PC-9 (cell line): ENCODE measurements at regions of chr6 and their contacts with region 1.

Region 1: GRCh38 chr6:41494212-41495110 is 51.7 kb upstream of the FOXP4 start:
- DNase-seq: no peak
- H3K4me3 ChIP-seq: no peak overlapping the region
- H3K27ac ChIP-seq: no peak overlapping the region
- H3K4me1 ChIP-seq: no peaks in the 10 kb centered on the region
- H3K27me3 ChIP-seq: peaks cover 14% of the 10 kb centered on the region; the same call in 1 of the 2 replicates
- CTCF ChIP-seq: no peak

Region 2: GRCh38 chr6:41518118-41518517 is 23.7 kb after region 1 on chr6:
- CTCF ChIA-PET with region 1: interaction called, 15 read pairs
- POLR2A ChIA-PET with region 1: no interaction called
- intact Hi-C with region 1: no loop called
- DNase-seq: no peak
- H3K4me3 ChIP-seq: no peak overlapping the region
- H3K27ac ChIP-seq: no peak overlapping the region
- H3K4me1 ChIP-seq: no peaks in the 10 kb centered on the region
- H3K27me3 ChIP-seq: no peaks in the 10 kb centered on the region
- CTCF ChIP-seq: no peak

Region 3: DNA sequence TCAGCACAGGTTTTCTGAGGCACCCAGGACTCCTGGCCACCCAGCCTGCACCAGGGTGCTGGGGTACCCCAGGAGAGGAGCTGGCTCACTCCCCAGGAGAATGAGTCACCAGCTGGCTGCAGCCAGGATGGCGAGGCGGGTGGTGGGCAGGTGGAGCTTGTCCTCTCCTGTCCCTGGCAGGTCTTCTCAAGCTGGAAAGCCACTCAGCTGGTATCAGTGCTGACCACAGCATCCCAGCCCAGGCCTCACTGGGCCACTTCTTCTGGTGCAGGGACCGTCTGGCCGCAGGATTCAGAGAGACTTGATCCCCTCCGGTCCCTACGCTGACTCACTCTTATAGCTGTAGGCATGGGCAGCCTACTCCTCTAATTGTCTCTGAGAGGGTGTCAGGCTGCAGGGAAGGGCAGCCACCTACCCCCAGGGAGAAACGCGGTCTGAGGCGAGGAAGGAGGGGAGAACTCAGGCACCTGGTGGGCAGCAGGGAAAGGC is 218.7 kb after region 1 on chr6:
- CTCF ChIA-PET with region 1: no interaction called
- POLR2A ChIA-PET with region 1: no interaction called
- intact Hi-C with region 1: no loop called
- DNase-seq: peak; percentile 89 to 93
- H3K4me3 ChIP-seq: no peak overlapping the region
- H3K27ac ChIP-seq: peak overlapping the region; percentile 58
- H3K4me1 ChIP-seq: peaks cover 35% of the 10 kb centered on the region
- H3K27me3 ChIP-seq: no peaks in the 10 kb centered on the region
- CTCF ChIP-seq: no peak